OCI-LY7 (cell line): ENCODE measurements at regions of chr10 and their contacts with region 1.

Region 1: GRCh38 chr10:132446661-132447194 is 49.7 kb downstream of the PWWP2B start:
- DNase-seq: peak; percentile 89
- H3K4me3 ChIP-seq: peak overlapping the region; percentile 57
- H3K27ac ChIP-seq: peak overlapping the region; percentile 81
- H3K4me1 ChIP-seq: peaks cover 52% of the 10 kb centered on the region
- CTCF ChIP-seq: peak; percentile 72

Region 2: DNA sequence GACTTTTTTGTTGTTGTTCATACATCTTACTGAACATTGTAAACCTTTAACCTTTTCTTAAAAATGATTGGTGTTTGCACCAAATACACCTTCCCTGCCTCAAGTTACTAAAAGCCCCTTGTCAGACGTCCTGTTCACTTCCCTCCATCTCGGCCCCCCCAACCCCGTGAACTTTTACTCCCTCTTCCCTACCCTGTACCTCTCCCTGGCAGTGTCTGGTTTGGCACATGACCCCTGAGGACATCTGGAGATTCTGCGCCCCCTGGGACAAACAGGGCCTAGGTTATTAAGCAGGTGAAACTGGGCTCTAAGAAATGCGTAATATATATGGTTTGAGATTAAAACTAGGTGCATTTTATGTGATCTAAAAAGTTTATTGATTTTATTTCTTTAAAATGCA is 544.5 kb before region 1 on chr10:
- CTCF ChIA-PET with region 1: no interaction called
- POLR2A ChIA-PET with region 1: no interaction called
- intact Hi-C with region 1: no loop called
- DNase-seq: peak; percentile 24
- H3K4me3 ChIP-seq: peak overlapping the region; percentile 93
- H3K27ac ChIP-seq: peak overlapping the region; percentile 57
- H3K4me1 ChIP-seq: peaks cover 44% of the 10 kb centered on the region
- CTCF ChIP-seq: peak; percentile 39; the same call in 1 of the 2 replicates

Region 3: GRCh38 chr10:132163278-132163765 is 283.4 kb before region 1 on chr10:
- CTCF ChIA-PET with region 1: no interaction called
- POLR2A ChIA-PET with region 1: no interaction called
- intact Hi-C with region 1: loop called (anchors 5 kb)
- DNase-seq: peak; percentile 91
- H3K4me3 ChIP-seq: peak overlapping the region; percentile 64
- H3K27ac ChIP-seq: peak overlapping the region; percentile 90
- H3K4me1 ChIP-seq: peaks cover 39% of the 10 kb centered on the region
- CTCF ChIP-seq: 0 out of 2 replicates have a peak, but pooled peaks have one; percentile 22

Region 4: DNA sequence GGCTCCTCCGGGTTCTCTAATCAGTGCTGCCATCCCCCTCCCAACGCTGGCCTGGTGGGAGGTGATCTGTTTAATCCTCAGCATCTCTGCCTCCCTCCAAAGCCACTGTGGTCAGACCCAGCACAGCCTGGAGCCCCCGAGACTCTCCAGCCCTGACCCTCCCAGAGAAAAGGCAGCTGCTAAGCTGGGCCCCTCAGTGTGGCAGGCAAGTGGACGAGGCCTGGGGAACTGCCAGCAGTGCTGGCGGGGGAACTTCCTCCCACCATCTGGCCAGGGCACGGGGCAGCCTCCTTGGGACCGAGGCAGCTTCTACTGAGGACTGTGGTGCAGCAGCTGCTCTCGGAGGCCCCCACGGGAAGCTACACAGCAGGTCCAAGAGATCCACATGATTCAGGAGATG is 208.9 kb before region 1 on chr10:
- CTCF ChIA-PET with region 1: no interaction called
- POLR2A ChIA-PET with region 1: no interaction called
- intact Hi-C with region 1: no loop called
- DNase-seq: no peak
- H3K4me3 ChIP-seq: no peak overlapping the region
- H3K27ac ChIP-seq: no peak overlapping the region
- H3K4me1 ChIP-seq: no peaks in the 10 kb centered on the region
- CTCF ChIP-seq: no peak

Region 5: DNA sequence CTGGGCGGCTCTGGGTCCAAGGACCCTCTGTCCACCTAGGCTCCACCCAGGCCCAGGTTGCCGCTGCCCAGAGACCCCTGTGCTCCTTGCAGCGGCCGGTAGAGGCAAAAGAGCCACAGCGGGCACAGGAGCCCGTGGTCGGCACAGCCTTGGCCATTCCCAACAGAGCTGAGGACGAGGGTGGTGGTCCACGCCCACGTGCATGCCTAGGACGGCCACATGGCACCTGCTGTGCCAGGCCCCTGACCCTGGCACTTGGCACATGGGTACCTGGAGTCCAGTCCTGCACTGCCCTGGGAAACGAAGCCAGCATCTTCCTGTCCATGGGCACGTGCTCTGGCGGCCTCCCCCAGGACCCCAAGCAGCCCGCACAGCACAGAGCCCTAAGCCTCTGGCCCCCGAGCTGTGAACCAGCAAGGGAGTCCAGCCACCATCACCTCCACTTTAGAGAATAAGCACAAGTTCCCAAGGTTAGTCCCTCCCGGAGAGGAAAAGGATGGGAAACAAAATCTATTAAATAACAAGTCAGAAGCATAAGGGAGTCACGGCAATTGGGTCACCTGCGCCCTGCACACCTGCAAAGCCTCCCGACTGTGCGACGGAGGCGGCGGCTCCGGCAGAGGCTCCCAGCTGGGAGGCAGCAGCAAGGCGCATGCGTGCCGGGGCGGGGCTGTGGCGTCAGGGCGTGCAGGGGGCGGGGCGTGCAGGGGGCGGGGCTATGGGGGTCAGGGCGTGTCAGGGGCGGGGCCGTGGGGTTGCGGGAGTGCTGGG is 198.1 kb before region 1 on chr10:
- CTCF ChIA-PET with region 1: no interaction called
- POLR2A ChIA-PET with region 1: no interaction called
- intact Hi-C with region 1: no loop called
- DNase-seq: peak; percentile 75
- H3K4me3 ChIP-seq: peak overlapping the region; percentile 28
- H3K27ac ChIP-seq: no peak overlapping the region
- H3K4me1 ChIP-seq: no peaks in the 10 kb centered on the region
- CTCF ChIP-seq: no peak

Region 6: DNA sequence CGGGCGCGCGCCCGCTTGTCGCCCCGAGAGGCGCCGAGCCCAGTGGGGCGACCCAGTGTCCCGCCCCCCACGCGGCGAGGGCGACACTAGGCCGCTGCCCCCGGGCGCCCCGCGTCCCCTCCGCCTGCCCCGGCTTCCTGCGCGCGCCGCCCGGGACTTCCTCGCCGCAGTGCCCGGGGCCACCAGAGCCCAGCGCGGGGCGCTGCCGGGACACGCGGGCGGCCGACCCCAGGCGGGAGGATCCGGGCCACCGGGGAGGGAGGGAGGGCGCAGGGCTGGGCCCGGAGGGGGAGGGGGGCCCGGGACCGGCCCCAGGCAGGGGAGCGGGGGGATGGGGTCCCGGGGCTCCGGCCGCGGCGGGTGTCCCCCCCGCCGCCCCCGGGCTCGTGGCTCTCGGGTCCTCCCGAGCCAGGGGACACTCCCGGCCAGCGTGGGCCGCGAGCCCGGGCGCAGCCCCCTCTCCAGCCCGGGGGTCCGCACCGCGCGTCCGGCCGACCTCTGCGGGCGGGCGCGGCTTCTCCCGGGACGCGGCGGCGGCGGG is 50.2 kb before region 1 on chr10:
- CTCF ChIA-PET with region 1: no interaction called
- POLR2A ChIA-PET with region 1: interaction called, 3 read pairs
- intact Hi-C with region 1: loop called (anchors 2 kb)
- DNase-seq: peak; percentile 57
- H3K4me3 ChIP-seq: peak overlapping the region; percentile 47
- H3K27ac ChIP-seq: no peak overlapping the region
- H3K4me1 ChIP-seq: peaks cover 9% of the 10 kb centered on the region
- CTCF ChIP-seq: no peak

Region 7: GRCh38 chr10:132421392-132421877 is 25.3 kb before region 1 on chr10:
- CTCF ChIA-PET with region 1: interaction called, 8 read pairs
- POLR2A ChIA-PET with region 1: interaction called, 18 read pairs
- intact Hi-C with region 1: loop called (anchors 1 kb)
- DNase-seq: peak; percentile 83
- H3K4me3 ChIP-seq: peak overlapping the region; percentile 49
- H3K27ac ChIP-seq: peak overlapping the region; percentile 91
- H3K4me1 ChIP-seq: peaks cover 63% of the 10 kb centered on the region
- CTCF ChIP-seq: no peak

Region 8: GRCh38 chr10:132560241-132560731 is 113.6 kb after region 1 on chr10:
- CTCF ChIA-PET with region 1: no interaction called
- POLR2A ChIA-PET with region 1: no interaction called
- intact Hi-C with region 1: no loop called
- DNase-seq: peak; percentile 80
- H3K4me3 ChIP-seq: peak overlapping the region; percentile 48
- H3K27ac ChIP-seq: peak overlapping the region; percentile 79
- H3K4me1 ChIP-seq: peaks cover 62% of the 10 kb centered on the region
- CTCF ChIP-seq: no peak